AG04449 (cell line): ENCODE measurements at regions of chr11 and their contacts with region 1.

Region 1: GRCh38 chr11:127875131-127875530 is 712.2 kb downstream of the ETS1 start:
- DNase-seq: no peak
- H3K4me3 ChIP-seq: no peak overlapping the region
- CTCF ChIP-seq: no peak

Region 2: DNA sequence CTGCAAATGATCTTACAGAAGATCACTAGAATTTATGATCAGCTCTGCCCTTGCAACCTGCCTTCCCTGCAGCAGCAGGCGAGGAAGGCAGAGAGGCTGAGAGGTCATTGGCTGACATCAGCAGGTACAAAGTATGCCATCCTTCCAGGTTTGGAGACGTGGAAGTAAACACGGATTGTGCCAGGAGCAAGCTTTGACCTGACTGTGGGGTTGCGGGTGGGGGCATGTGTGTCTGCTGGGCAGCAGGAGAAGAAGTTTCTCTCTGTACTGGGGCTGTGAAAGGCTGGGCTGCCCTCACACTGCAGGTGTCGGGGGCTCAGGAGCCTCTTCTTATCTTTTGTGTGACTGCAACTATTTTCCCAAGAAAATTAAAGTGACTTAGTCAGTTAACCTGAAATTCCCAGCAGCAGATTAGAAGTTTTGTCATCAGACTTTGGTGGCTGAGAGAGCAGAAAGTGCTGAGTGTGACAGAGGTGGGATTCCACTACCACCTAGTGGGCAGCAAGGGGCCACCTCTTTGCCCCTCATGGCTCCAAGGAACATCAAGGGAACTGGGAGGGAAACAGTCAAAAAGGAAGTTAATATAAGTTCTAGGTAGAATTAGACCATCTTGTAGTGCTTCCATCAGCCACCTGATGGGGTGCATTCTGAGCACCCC is 146.3 kb after region 1 on chr11:
- CTCF ChIA-PET with region 1: interaction called, 12 read pairs
- POLR2A ChIA-PET with region 1: no interaction called
- DNase-seq: no peak
- H3K4me3 ChIP-seq: no peak overlapping the region
- CTCF ChIP-seq: peak; percentile 52